ENCODE measurements at regions of chr13 and their contacts with region 1.

Region 1: GRCh38 chr13:51814825-51815650 is 11.1 kb upstream of the DHRS12 start:
- DNase-seq: peak; percentile 45 to 63 (median 60)
- ATAC-seq: peak; percentile 13 to 69 (median 60)
- H3K4me3 ChIP-seq: peak overlapping the region in 9 of 12 donors; percentile 8 to 39 (median 19)
- H3K27ac ChIP-seq: peak overlapping the region in 4 of 12 donors; percentile 17 to 42 (median 22)
- H3K4me1 ChIP-seq: peaks cover 0 to 40% (median 13%) of the 10 kb centered on the region in 12 donors
- H3K27me3 ChIP-seq: no peaks in the 10 kb centered on the region
- CTCF ChIP-seq: peak; percentile 68 to 88 (median 82)
- POLR2A ChIP-seq: no peak

Region 2: GRCh38 chr13:51832471-51833152 is 17.6 kb after region 1 on chr13:
- intact Hi-C with region 1: loop called in 2 of 10 experiments (anchors 1 to 2 kb)
- DNase-seq: peak in 4 of 5 donors; percentile 47 to 54 (median 51)
- ATAC-seq: peak; percentile 87 to 93 (median 90)
- H3K4me3 ChIP-seq: no peak overlapping the region
- H3K27ac ChIP-seq: no peak overlapping the region
- H3K4me1 ChIP-seq: peaks cover 0 to 14% (median 3%) of the 10 kb centered on the region in 12 donors
- H3K27me3 ChIP-seq: no peaks in the 10 kb centered on the region
- CTCF ChIP-seq: peak; percentile 24 to 63 (median 50)
- POLR2A ChIP-seq: no peak

Region 3: DNA sequence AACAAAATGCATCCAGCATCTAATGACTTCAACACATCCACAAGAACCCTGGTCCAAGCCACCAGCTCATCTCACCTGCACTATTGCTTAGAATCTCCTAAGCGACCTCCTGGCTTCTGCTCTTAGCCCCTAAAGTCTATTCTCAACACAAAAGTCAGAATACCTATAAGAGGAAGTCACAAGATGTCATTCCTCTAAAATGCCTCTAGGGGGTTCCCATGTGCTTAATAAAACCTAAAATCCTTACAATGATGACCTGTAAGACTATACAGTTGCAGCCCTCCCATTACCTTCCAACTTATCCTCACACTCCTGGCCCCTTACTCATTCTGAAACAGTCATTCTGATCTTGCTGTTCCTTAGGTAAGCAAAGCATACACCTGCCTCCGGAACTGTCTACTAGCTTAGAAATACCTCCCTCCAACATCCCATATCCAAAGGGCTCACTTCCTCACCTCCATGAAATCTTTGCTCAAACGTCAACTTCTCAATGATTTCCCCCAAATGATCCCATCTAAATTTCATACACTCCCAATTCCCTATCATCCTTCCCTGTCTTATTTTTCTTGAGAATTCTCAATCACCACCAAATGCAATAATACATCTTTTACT is 186.2 kb after region 1 on chr13:
- intact Hi-C with region 1: loop called in 2 of 10 experiments (anchors 10 kb)
- DNase-seq: no peak
- ATAC-seq: peak in 3 of 4 donors; percentile 36 to 48 (median 40)
- H3K4me3 ChIP-seq: no peak overlapping the region
- H3K27ac ChIP-seq: no peak overlapping the region
- H3K4me1 ChIP-seq: peaks cover 0 to 25% (median 5%) of the 10 kb centered on the region in 12 donors
- H3K27me3 ChIP-seq: no peaks in the 10 kb centered on the region
- CTCF ChIP-seq: peak; percentile 52 to 83 (median 69)
- POLR2A ChIP-seq: no peak

Measured in heart left ventricle (tissue), 16 donors.